ENCODE measurements at regions of chr6 and their contacts with region 1.

Region 1: DNA sequence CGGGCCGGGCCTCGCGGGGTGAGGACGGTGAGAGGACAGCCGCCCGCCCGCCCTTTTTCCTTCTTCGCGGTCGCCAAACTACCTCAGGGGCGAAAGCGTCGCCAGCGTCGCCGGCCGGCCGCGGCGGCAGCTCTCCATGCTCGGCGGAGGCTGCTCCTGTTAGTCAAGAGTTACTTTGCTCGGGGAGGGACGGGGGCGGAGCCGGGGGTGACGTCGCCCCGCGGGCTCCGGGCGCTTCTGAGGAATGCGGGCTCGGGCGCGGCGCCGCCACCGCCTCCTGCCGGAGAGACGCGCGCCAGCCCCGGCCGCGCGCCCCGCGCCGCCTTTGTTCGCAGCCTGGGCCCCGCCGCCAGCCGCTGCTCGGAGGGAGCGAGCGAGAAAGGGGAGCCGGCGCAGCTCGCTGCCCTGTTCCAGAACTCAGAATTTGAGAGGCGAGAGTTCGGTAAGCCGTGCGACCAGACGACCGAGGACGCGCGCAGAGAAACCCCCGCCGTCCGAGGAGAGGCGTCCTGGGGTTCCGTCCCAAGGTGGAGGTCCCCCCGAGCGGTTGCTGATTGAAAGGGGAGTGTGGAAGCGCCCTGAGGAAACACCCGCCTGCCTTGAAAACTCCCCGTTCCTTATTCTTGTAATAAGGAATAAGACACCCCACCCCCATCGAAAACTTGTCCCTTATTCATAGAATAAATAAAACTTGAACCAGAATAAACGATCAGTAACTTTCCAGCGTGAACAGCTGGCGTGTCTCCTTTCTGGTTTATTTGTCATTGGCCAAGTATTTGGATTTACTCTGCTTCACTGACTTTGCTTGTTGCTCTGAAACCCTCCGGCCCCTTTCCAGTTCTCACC is at the start of gene PTPRK:
- DNase-seq: peak; percentile 96
- H3K4me3 Mint-ChIP-seq: peak within 1 kb of the TSS; percentile 100
- H3K27ac Mint-ChIP-seq: peak within 1 kb of the TSS; percentile 88
- H3K4me1 Mint-ChIP-seq: peaks cover 16% of the 10 kb centered on the region
- H3K27me3 Mint-ChIP-seq: no peaks in the 10 kb centered on the region
- CTCF ChIP-seq: peak; percentile 51
- total RNA-seq, gene PTPRK: 201 and 265 TPM in 2 replicates

Region 2: DNA sequence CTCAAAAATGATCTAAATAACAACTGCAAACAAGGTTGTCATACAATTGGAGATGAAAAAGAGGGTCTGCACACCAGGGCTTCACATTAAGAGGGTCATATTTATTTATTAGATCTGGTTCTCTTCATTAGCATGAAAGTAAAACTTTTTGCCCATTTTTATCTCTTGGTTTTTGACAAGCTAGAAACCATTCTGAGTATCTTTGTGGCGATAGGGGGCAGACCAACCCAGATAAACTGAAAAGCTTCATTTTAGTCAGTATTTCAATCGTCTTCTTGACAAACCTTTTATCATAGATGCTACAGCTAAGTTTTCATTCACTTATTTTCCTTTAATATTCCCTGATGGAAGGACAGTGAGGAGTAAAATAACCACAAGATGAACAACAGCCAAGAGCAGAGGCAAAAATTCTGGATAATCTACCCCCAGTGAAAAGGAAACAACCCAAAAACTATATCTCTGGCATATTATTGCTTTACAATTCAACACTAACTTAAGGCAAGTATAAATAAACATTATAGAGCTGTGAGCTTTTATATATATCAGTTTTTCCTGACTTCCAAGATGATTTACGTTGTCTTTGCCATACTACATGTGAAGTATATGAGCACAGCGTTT is 665.0 kb before region 1 on chr6:
- CTCF ChIA-PET with region 1: interaction called, 5 read pairs
- intact Hi-C with region 1: loop called (anchors 5 kb)
- DNase-seq: peak; percentile 22
- H3K4me3 Mint-ChIP-seq: no peak overlapping the region
- H3K27ac Mint-ChIP-seq: no peak overlapping the region
- H3K4me1 Mint-ChIP-seq: no peaks in the 10 kb centered on the region
- H3K27me3 Mint-ChIP-seq: no peaks in the 10 kb centered on the region
- CTCF ChIP-seq: peak; percentile 42

Region 3: DNA sequence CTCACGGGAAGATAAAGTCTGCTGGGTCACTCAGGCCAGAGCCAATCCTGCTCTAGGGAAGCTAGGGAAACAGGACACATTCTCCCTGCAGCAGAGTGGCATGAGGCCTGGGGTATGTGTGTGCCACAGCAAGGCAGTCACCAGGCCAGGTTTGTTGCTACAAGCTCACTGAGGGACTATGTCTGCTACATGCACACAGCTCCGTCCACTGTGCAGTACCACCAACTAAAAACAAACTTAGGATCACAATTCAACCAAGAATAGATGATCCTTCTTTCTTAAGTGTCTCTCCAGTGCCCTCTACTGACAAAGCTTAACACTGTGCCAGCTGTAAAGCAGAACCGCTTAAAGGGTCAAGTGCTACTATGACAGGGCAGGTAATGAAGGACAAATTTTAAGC is 192.8 kb before region 1 on chr6:
- CTCF ChIA-PET with region 1: interaction called, 3 read pairs
- intact Hi-C with region 1: loop called (anchors 5 kb)
- DNase-seq: peak; percentile 46
- H3K4me3 Mint-ChIP-seq: no peak overlapping the region
- H3K27ac Mint-ChIP-seq: peak overlapping the region; percentile 6
- H3K4me1 Mint-ChIP-seq: peaks cover 58% of the 10 kb centered on the region
- H3K27me3 Mint-ChIP-seq: no peaks in the 10 kb centered on the region
- CTCF ChIP-seq: peak; percentile 52

Region 4: DNA sequence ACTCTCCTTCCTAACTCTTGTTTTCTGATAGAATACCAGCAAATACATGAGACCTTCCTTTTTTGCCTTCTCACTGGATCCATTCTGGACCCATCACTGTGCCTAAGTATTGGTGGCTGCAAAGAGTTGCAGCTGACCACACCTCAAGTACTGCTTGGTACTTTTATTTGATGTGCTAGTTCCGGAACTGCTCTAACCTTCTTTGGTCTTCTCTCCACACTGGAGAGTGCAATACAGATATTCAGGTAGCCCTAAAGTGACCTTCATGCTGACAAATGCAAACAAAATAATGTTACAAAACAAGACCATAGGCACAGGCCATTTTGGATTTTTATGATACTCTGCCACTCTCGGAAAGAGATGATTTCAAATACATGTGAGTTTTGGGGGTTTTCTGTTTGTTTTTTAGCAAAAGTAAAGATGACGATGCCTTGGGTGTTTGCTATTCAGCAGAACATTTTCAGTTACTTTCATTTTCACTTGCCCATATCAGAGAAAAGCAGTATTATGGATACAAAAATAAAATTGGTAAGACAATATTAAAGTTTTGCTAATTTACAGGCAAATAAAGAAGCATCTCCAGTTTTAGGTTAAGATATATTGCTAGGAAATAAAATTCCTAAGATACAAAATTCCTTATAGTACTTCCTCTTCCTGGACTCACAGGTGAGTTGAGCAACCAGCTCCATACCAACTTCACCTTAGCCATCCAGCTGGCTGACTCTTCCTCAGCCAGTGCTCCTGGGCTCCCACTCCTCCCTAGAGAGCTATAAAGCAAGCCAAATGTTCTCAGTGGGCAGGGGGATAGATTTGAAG is 42.2 kb before region 1 on chr6:
- CTCF ChIA-PET with region 1: no interaction called
- intact Hi-C with region 1: loop called (anchors 5 kb)
- DNase-seq: no peak
- H3K4me3 Mint-ChIP-seq: peak overlapping the region; percentile 47
- H3K27ac Mint-ChIP-seq: peak overlapping the region; percentile 24
- H3K4me1 Mint-ChIP-seq: peaks cover 64% of the 10 kb centered on the region
- H3K27me3 Mint-ChIP-seq: no peaks in the 10 kb centered on the region
- CTCF ChIP-seq: no peak

Region 5: DNA sequence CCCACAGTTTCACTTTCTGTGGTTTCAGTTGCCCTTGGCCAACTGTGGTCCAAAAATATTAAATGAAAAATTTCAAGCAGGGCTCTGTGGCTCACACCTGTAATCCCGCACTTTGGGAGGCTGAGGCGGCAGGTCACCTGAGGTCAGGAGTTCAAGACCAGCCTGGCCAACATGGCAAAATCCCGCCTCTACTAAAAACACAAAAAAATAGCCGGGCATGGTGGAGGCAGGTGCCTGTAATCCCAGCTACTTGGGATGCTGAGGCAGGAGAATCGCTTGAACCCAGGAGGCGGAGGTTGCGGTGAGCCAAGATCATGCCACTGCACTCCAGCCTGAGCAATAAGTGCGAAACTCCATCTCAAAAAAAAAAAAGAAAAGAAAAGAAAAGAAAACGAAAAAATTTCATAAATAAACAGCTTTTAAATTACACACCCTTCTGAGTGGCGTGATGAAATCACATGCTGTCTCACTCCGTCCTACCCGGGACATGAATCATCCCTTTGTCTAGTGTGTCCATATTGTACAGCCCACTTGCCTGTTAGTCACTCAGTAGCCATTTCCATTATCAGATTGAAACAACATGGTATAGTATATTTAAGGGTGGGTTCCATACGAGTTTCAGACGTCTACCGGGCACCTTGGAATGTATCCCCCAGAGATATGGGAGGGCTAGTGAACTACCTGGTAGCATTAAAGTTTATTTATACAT is 11.9 kb before region 1 on chr6:
- CTCF ChIA-PET with region 1: interaction called, 10 read pairs
- intact Hi-C with region 1: no loop called
- DNase-seq: peak; percentile 69
- H3K4me3 Mint-ChIP-seq: peak overlapping the region; percentile 56
- H3K27ac Mint-ChIP-seq: peak overlapping the region; percentile 97
- H3K4me1 Mint-ChIP-seq: peaks cover 77% of the 10 kb centered on the region
- H3K27me3 Mint-ChIP-seq: no peaks in the 10 kb centered on the region
- CTCF ChIP-seq: no peak

Region 6: GRCh38 chr6:128713461-128713860 is 192.8 kb after region 1 on chr6:
- CTCF ChIA-PET with region 1: no interaction called
- intact Hi-C with region 1: no loop called
- DNase-seq: no peak
- H3K4me3 Mint-ChIP-seq: no peak overlapping the region
- H3K27ac Mint-ChIP-seq: no peak overlapping the region
- H3K4me1 Mint-ChIP-seq: no peaks in the 10 kb centered on the region
- H3K27me3 Mint-ChIP-seq: no peaks in the 10 kb centered on the region
- CTCF ChIP-seq: no peak

Region 7: GRCh38 chr6:128731249-128732165 is 210.8 kb after region 1 on chr6:
- CTCF ChIA-PET with region 1: interaction called, 7 read pairs
- intact Hi-C with region 1: loop called (anchors 2 kb)
- DNase-seq: peak; percentile 36
- H3K4me3 Mint-ChIP-seq: no peak overlapping the region
- H3K27ac Mint-ChIP-seq: no peak overlapping the region
- H3K4me1 Mint-ChIP-seq: no peaks in the 10 kb centered on the region
- H3K27me3 Mint-ChIP-seq: no peaks in the 10 kb centered on the region
- CTCF ChIP-seq: peak; percentile 46

Measured in Calu3 (cell line).